HepG2 (cell line): ENCODE measurements at regions of chr11 and their contacts with region 1.

Region 1: GRCh38 chr11:124953753-124954589 is at the start of gene CCDC15:
- DNase-seq: peak; percentile 96
- ATAC-seq: peak; percentile 100
- H3K4me3 ChIP-seq: peak within 1 kb of the TSS; percentile 76 to 83 (median 79)
- H3K27ac ChIP-seq: peak within 1 kb of the TSS; percentile 78
- H3K4me1 ChIP-seq: peaks cover 25% of the 10 kb centered on the region
- H3K27me3 ChIP-seq: no peaks in the 10 kb centered on the region; a peak in 2 of 5 replicates
- CTCF ChIP-seq: peak; percentile 49
- EP300 ChIP-seq: no peak
- POLR2A ChIP-seq: peak; percentile 85 to 93
- RAD21 ChIP-seq: no peak
- total RNA-seq, gene CCDC15: 4.6 and 6.5 TPM in 2 replicates

Region 2: DNA sequence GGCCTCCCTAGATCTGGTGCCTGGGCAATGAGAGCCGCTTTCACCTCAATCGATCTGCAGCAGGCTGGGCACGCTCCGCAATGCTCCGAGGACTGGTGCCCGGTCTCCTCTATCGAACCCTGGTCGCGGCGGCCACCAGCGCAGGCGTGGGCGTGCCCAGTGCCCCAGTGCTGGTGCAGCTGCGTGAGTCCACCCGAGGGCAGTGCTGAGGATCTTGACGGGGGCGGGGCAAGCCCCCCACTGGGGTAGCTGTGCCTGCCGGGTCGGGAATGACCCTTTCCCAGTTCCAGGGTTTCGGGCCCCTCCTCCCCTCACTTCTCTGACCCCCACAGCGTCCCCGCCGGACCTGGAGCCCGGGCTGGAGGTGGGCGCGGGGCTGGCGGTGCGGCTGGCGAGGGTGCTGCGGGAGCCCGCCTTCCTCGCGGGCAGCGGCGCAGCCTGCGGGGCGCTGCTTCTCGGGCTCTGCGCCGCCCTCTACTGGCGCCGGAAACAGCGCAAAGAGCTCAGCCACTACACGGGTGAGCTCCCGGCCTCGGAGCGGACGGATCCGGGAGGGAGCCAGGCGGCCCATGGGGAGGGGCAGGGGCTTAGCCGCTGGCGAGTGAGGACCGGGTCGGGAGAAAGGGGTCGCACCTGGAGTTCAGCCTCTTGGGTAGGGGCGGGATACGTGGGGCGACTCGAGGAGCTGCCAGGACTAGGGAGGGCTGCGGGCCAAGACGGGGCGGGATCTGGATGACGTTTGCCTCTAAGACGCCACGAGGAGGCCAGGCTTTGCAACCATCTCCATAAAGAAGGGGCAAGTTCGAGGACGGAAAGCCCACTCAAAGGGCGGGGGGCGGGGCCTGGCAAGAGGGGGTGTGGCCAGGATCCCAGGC is 77.8 kb before region 1 on chr11:
- CTCF ChIA-PET with region 1: no interaction called
- POLR2A ChIA-PET with region 1: interaction called, 8 read pairs
- in situ Hi-C with region 1: loop called (anchors 5 kb)
- intact Hi-C with region 1: no loop called
- DNase-seq: peak; percentile 54
- ATAC-seq: peak; percentile 93
- H3K4me3 ChIP-seq: peak overlapping the region; percentile 51 to 78 (median 64)
- H3K27ac ChIP-seq: no peak overlapping the region
- H3K4me1 ChIP-seq: peaks cover 47% of the 10 kb centered on the region
- H3K27me3 ChIP-seq: peaks cover 2 to 63% of the 10 kb centered on the region in 2 experiments; a peak in 4 of 5 replicates
- CTCF ChIP-seq: peak; percentile 90
- EP300 ChIP-seq: no peak
- POLR2A ChIP-seq: 0 out of 4 replicates have a peak, but pooled peaks of 1 of the 2 experiments have one; percentile 28
- RAD21 ChIP-seq: peak; percentile 54; the same call in 1 of the 2 replicates

Region 3: DNA sequence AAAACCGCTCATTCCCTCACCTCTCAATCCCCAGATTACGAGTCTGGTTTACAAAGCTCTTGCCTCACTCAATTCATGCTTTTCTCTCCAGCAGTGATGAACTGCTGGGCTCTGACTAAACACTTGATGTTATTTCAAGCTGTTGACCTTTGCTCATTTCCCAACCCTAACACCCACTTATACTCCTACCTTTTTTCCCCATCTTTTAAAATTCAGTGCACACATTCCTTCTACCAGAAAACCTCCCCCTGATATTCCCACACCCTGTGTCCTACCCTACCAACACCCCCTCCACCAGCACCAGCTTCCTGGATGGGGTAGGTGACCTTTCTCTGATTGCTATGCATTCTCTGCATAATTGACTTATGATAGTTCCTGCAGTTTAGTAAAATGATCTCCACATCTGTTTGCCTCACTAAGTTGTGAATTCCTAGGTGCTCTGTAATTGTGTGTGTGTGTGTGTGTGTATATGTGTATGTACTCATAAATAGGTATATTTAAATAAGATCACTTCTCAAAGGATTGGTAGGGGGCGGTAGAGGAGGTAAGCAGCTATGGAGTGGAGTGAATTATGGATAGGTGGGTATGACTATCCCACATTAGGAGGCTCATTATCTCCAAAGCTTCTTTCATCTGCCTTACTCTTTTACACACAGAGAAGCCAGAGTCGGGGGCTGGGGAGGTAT is 19.0 kb before region 1 on chr11:
- CTCF ChIA-PET with region 1: no interaction called
- POLR2A ChIA-PET with region 1: interaction called, 61 read pairs
- in situ Hi-C with region 1: no loop called
- intact Hi-C with region 1: no loop called
- DNase-seq: peak; percentile 78
- ATAC-seq: peak; percentile 63
- H3K4me3 ChIP-seq: peak overlapping the region; percentile 69 to 84 (median 83)
- H3K27ac ChIP-seq: peak overlapping the region; percentile 90
- H3K4me1 ChIP-seq: peaks cover 87% of the 10 kb centered on the region
- H3K27me3 ChIP-seq: no peaks in the 10 kb centered on the region; a peak in 1 of 5 replicates
- CTCF ChIP-seq: peak; percentile 62
- EP300 ChIP-seq: peak in 1 of 2 experiments; percentile 64; a peak in 1 of 4 replicates
- POLR2A ChIP-seq: 0 out of 4 replicates have a peak, but pooled peaks of 1 of the 2 experiments have one; percentile 41
- RAD21 ChIP-seq: no peak

Region 4: DNA sequence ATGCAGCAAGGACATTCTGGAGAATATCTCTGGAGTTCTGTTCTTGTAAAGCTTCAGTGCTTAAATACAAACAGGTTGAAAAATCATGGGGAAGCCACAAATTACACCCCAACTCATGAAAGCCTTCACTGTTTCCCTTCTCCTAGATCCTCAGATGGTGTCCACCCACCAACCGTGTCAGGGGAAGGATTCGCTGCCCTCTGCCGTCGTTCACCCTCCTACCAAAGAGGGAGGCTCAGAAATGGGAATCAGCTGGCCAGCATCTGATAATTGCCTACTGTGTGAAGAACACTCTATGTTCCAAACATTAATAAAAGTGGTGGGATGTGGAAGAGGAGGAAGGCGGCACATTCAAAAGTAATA is 10.7 kb before region 1 on chr11:
- CTCF ChIA-PET with region 1: no interaction called
- POLR2A ChIA-PET with region 1: interaction called, 61 read pairs
- in situ Hi-C with region 1: no loop called
- intact Hi-C with region 1: no loop called
- DNase-seq: peak; percentile 39
- ATAC-seq: peak; percentile 67
- H3K4me3 ChIP-seq: peak overlapping the region in 2 of 3 experiments; percentile 25 to 53; a peak in 2 of 6 replicates
- H3K27ac ChIP-seq: peak overlapping the region; percentile 89
- H3K4me1 ChIP-seq: peaks cover 90% of the 10 kb centered on the region
- H3K27me3 ChIP-seq: no peaks in the 10 kb centered on the region
- CTCF ChIP-seq: peak; percentile 42
- EP300 ChIP-seq: no peak
- POLR2A ChIP-seq: no peak
- RAD21 ChIP-seq: no peak

Region 5: GRCh38 chr11:125111343-125112207 is 157.6 kb after region 1 on chr11 and contains the start of gene TMEM218:
- CTCF ChIA-PET with region 1: no interaction called
- POLR2A ChIA-PET with region 1: interaction called, 22 read pairs
- in situ Hi-C with region 1: no loop called
- intact Hi-C with region 1: no loop called
- DNase-seq: peak; percentile 98
- ATAC-seq: peak; percentile 98
- H3K4me3 ChIP-seq: peak within 1 kb of the TSS; percentile 72 to 94 (median 84)
- H3K27ac ChIP-seq: peak within 1 kb of the TSS; percentile 79
- H3K4me1 ChIP-seq: peaks cover 14% of the 10 kb centered on the region
- H3K27me3 ChIP-seq: no peaks in the 10 kb centered on the region; a peak in 1 of 5 replicates
- CTCF ChIP-seq: no peak
- EP300 ChIP-seq: no peak
- POLR2A ChIP-seq: peak; percentile 52 to 76; a peak in 3 of 4 replicates
- RAD21 ChIP-seq: no peak
- total RNA-seq, gene TMEM218: 14.0 and 14.2 TPM in 2 replicates

Region 6: DNA sequence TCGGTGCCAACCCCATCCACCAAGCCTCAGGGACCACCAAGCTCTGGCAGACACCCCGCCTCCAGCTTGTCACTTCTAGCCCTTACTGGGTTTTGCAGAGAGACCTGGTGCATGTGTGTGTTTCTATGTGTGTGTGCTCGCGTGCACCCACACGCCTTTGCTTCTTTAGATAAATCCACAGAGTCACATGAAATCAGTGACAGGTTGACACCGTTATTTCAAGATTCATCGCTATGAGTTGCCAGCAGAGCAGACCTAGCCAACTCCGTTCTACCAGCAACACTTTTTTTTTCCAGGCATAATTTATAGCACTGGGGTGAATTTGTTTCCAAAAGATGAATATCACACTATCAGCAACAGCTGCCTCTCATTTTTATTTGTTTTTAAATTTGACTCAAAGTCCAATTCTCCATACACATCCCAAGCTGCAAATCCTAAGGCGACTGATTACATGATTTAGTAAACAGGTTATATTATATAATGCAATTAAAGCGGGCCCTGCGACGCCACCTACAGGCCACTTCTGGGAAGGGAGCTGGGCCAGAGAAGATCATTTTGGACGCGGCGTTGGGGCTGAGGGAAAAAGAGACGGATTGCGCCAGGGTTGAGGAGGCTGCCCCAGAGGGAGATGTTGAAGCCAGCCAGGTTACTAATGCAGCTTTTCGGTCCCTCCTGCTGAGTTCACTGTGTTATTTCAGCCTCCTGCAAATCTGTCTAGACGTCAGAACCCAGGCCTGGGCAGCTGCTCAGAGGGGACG is 391.6 kb after region 1 on chr11:
- CTCF ChIA-PET with region 1: no interaction called
- POLR2A ChIA-PET with region 1: no interaction called
- in situ Hi-C with region 1: loop called (anchors 10 kb)
- intact Hi-C with region 1: no loop called
- DNase-seq: peak; percentile 15
- ATAC-seq: peak; percentile 62
- H3K4me3 ChIP-seq: no peak overlapping the region
- H3K27ac ChIP-seq: no peak overlapping the region
- H3K4me1 ChIP-seq: no peaks in the 10 kb centered on the region
- H3K27me3 ChIP-seq: peaks cover 5 to 57% of the 10 kb centered on the region in 2 experiments; a peak in 3 of 5 replicates
- CTCF ChIP-seq: peak; percentile 64
- EP300 ChIP-seq: no peak; a peak in 1 of 4 replicates
- POLR2A ChIP-seq: no peak
- RAD21 ChIP-seq: no peak